ENCODE measurements at regions of chr9 and their contacts with region 1.

Region 1: DNA sequence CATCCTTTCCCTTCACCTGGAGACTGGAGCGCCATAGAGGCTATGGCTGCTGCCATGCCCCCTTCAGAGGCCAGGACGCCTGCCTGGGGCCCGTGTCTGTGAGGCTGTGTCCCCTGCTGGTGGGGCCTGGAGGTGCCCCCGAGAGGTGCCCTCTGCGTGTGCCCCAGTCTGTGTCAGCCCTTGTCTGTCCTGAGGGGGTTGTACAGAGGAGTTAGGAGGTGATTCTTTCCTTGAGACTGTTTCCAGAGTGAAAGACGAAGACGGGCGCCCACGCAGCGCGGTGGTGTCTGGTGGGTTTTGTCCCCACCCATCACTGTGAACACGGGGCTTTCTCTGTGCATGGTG is 24.6 kb downstream of the TRAF2 start:
- DNase-seq: no peak
- ATAC-seq: peak; percentile 36 to 57
- H3K4me3 Mint-ChIP-seq: no peak overlapping the region
- H3K27ac Mint-ChIP-seq: no peak overlapping the region
- H3K4me1 Mint-ChIP-seq: peaks cover 0 to 5% (median 2%) of the 10 kb centered on the region in 4 donors
- H3K27me3 Mint-ChIP-seq: no peaks in the 10 kb centered on the region

Region 2: GRCh38 chr9:136429683-136430590 is 480.9 kb before region 1 on chr9:
- POLR2A ChIA-PET with region 1: interaction called, 11 read pairs
- DNase-seq: no peak
- ATAC-seq: no peak
- H3K4me3 Mint-ChIP-seq: no peak overlapping the region
- H3K27ac Mint-ChIP-seq: peak overlapping the region in 2 of 10 donors; percentile 29 to 40
- H3K4me1 Mint-ChIP-seq: no peaks in the 10 kb centered on the region
- H3K27me3 Mint-ChIP-seq: no peaks in the 10 kb centered on the region

Region 3: GRCh38 chr9:136928591-136928990 is 17.7 kb after region 1 on chr9:
- POLR2A ChIA-PET with region 1: no interaction called
- DNase-seq: peak in 1 of 10 donors; percentile 56
- ATAC-seq: no peak
- H3K4me3 Mint-ChIP-seq: no peak overlapping the region
- H3K27ac Mint-ChIP-seq: peak overlapping the region in 3 of 10 donors; percentile 4 to 42 (median 25)
- H3K4me1 Mint-ChIP-seq: peaks cover 0 to 6% (median 5%) of the 10 kb centered on the region in 4 donors
- H3K27me3 Mint-ChIP-seq: no peaks in the 10 kb centered on the region

Measured in naive thymus-derived CD8-positive, alpha-beta T cell (primary cell).